Heart right ventricle (tissue), 16 donors: ENCODE measurements at regions of chr22 and their contacts with region 1.

Region 1: GRCh38 chr22:23849009-23850006 is 8.4 kb upstream of the SLC2A11 start:
- DNase-seq: peak; percentile 81 to 89
- ATAC-seq: peak; percentile 49 to 67 (median 60)
- H3K4me3 ChIP-seq: peak overlapping the region in 3 of 10 donors; percentile 18 to 25 (median 23)
- H3K27ac ChIP-seq: no peak overlapping the region
- H3K4me1 ChIP-seq: peaks cover 18 to 52% (median 39%) of the 10 kb centered on the region in 9 donors
- H3K27me3 ChIP-seq: peaks cover 0 to 9% (median 0%) of the 10 kb centered on the region in 7 donors
- CTCF ChIP-seq: peak; percentile 97 to 99 (median 98)

Region 2: DNA sequence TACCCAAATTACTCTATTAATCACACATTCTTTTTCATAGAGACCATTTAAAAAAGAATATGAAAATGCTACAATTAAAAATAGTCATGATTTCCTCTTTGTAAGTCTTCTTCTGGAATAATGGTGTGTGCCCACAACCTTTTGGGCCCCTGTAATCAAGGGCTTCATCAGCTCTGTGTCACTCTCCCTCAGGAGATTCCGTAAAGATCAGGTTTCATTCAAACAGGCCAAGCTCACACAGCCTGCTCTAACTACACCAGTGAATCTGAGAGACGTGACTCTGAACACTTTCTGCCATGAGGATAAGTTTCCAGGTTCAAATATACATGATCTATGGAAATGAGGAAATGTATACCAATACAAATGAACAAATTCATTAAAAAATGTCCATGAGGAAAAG is 226.7 kb before region 1 on chr22:
- intact Hi-C with region 1: loop called in 2 of 10 experiments (anchors 10 kb)
- DNase-seq: no peak
- ATAC-seq: no peak
- H3K4me3 ChIP-seq: no peak overlapping the region
- H3K27ac ChIP-seq: no peak overlapping the region
- H3K4me1 ChIP-seq: no peaks in the 10 kb centered on the region
- H3K27me3 ChIP-seq: no peaks in the 10 kb centered on the region
- CTCF ChIP-seq: no peak

Region 3: GRCh38 chr22:23632178-23632577 is 217.1 kb before region 1 on chr22 and contains the start of gene DRICH1:
- intact Hi-C with region 1: loop called in 3 of 10 experiments (anchors 10 kb)
- DNase-seq: no peak
- ATAC-seq: no peak
- H3K4me3 ChIP-seq: no peak within 1 kb of the TSS
- H3K27ac ChIP-seq: no peak within 1 kb of the TSS
- H3K4me1 ChIP-seq: no peaks in the 10 kb centered on the region
- H3K27me3 ChIP-seq: no peaks in the 10 kb centered on the region
- CTCF ChIP-seq: no peak
- total RNA-seq, gene DRICH1: not detected

Region 4: GRCh38 chr22:23675492-23676415 is 173.6 kb before region 1 on chr22:
- intact Hi-C with region 1: no loop called
- DNase-seq: peak in 1 of 2 donors; percentile 37
- ATAC-seq: peak in 4 of 8 donors; percentile 8 to 40 (median 28)
- H3K4me3 ChIP-seq: no peak overlapping the region
- H3K27ac ChIP-seq: peak overlapping the region in 1 of 10 donors; percentile 68
- H3K4me1 ChIP-seq: peaks cover 0 to 12% (median 0%) of the 10 kb centered on the region in 9 donors
- H3K27me3 ChIP-seq: no peaks in the 10 kb centered on the region
- CTCF ChIP-seq: no peak